ENCODE measurements at regions of chr5 and their contacts with region 1.

Region 1: DNA sequence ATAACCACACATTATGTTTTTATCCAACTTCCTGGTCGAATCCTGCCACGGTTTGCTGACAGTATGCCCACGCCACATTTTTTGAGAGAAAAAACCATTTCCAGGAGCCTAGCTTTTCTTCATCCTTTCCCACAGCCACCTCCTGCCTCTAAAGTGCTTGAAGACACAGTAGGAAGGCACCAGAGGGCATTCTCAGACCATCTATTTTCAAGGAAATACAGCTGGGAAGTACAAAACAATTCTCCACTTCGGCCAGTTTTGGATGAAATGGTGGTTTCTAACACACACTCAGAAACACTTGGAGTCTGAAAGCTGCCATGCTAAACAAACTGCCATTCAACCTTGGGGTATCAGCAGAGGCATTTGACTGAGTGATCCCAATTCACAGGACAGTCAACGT is 86.3 kb upstream of the RPS23 start:
- DNase-seq: peak; percentile 80
- H3K4me3 ChIP-seq: no peak overlapping the region
- H3K27ac ChIP-seq: no peak overlapping the region
- H3K4me1 ChIP-seq: peaks cover 9% of the 10 kb centered on the region
- H3K27me3 ChIP-seq: no peaks in the 10 kb centered on the region
- CTCF ChIP-seq: peak; percentile 55 to 58
- POLR2A ChIP-seq: no peak

Region 2: GRCh38 chr5:81719743-81720345 is 644.7 kb before region 1 on chr5:
- CTCF ChIA-PET with region 1: no interaction called
- POLR2A ChIA-PET with region 1: no interaction called
- dilution Hi-C with region 1: no loop called
- intact Hi-C with region 1: no loop called
- DNase-seq: no peak
- H3K4me3 ChIP-seq: no peak overlapping the region
- H3K27ac ChIP-seq: no peak overlapping the region
- H3K4me1 ChIP-seq: peaks cover 10% of the 10 kb centered on the region
- H3K27me3 ChIP-seq: no peaks in the 10 kb centered on the region
- CTCF ChIP-seq: no peak
- POLR2A ChIP-seq: no peak

Region 3: GRCh38 chr5:82107267-82107666 is 257.2 kb before region 1 on chr5:
- CTCF ChIA-PET with region 1: no interaction called
- POLR2A ChIA-PET with region 1: no interaction called
- dilution Hi-C with region 1: no loop called
- intact Hi-C with region 1: no loop called
- DNase-seq: peak; percentile 32
- H3K4me3 ChIP-seq: no peak overlapping the region
- H3K27ac ChIP-seq: no peak overlapping the region
- H3K4me1 ChIP-seq: no peaks in the 10 kb centered on the region
- H3K27me3 ChIP-seq: no peaks in the 10 kb centered on the region
- CTCF ChIP-seq: peak; percentile 9 to 31
- POLR2A ChIP-seq: no peak

Region 4: GRCh38 chr5:82374637-82375036 is 10.1 kb after region 1 on chr5:
- CTCF ChIA-PET with region 1: interaction called, 11 read pairs
- POLR2A ChIA-PET with region 1: no interaction called
- dilution Hi-C with region 1: no loop called
- intact Hi-C with region 1: no loop called
- DNase-seq: no peak
- H3K4me3 ChIP-seq: no peak overlapping the region
- H3K27ac ChIP-seq: no peak overlapping the region
- H3K4me1 ChIP-seq: no peaks in the 10 kb centered on the region
- H3K27me3 ChIP-seq: no peaks in the 10 kb centered on the region
- CTCF ChIP-seq: no peak
- POLR2A ChIP-seq: no peak

Region 5: GRCh38 chr5:82406205-82406773 is 41.8 kb after region 1 on chr5:
- CTCF ChIA-PET with region 1: interaction called, 8 read pairs
- POLR2A ChIA-PET with region 1: no interaction called
- dilution Hi-C with region 1: no loop called
- intact Hi-C with region 1: loop called (anchors 1 kb)
- DNase-seq: peak; percentile 100
- H3K4me3 ChIP-seq: peak overlapping the region in 1 of 3 experiments; percentile 1
- H3K27ac ChIP-seq: peak overlapping the region; percentile 99
- H3K4me1 ChIP-seq: peaks cover 28% of the 10 kb centered on the region
- H3K27me3 ChIP-seq: no peaks in the 10 kb centered on the region
- CTCF ChIP-seq: no peak
- POLR2A ChIP-seq: peak; percentile 65

Region 6: DNA sequence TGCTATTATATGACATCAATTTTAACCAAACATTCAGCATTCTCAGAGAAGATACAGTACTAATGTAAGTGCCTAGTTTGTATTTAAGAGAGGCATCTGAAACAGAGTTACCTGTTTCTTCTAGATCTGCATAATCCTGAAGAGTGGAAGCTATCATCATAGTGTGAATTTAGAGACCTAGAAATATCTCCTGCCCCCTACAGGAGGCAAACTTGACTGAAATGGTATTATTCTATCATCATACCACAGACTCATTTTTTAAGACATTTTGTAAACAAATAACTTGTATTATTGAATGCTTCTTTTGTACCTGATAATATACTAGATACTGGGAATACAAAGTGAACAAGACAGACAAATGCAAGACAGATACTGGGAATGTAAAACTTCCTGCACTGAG is 130.4 kb after region 1 on chr5:
- CTCF ChIA-PET with region 1: interaction called, 77 read pairs
- POLR2A ChIA-PET with region 1: no interaction called
- dilution Hi-C with region 1: no loop called
- intact Hi-C with region 1: loop called (anchors 1 kb)
- DNase-seq: peak; percentile 30
- H3K4me3 ChIP-seq: no peak overlapping the region
- H3K27ac ChIP-seq: no peak overlapping the region
- H3K4me1 ChIP-seq: no peaks in the 10 kb centered on the region
- H3K27me3 ChIP-seq: peaks cover 0 to 2% of the 10 kb centered on the region in 2 experiments
- CTCF ChIP-seq: peak in 1 of 2 donors; percentile 6
- POLR2A ChIP-seq: no peak

Region 7: DNA sequence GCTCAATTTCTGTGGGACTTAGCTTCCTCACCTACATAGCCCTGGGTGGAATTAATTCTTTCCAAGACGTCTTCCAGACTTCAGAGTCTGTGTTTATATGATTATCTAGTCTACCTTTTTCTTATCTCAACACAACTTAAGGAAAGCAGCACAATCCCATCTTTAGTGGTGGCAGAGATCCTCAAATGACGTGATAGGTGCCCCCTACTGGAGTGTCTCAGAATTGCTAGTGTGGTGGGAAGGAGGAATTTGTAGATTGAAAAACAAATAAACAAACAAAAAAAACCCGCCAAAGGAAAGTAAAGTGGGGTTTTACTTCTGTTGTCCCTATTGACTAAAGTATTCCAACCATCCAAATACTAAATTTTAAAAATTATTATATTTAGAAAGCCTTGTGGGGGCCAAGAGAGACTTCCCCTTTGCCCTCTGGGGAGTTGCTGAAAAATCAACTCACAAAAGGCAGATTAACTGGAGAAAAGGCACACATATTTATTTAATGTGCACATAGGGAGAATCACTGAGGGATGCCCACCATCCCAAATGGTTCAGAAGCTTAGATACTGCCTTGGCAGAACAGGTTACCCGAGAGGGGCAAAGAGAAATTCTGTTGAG is 429.4 kb after region 1 on chr5:
- CTCF ChIA-PET with region 1: interaction called, 29 read pairs
- POLR2A ChIA-PET with region 1: no interaction called
- dilution Hi-C with region 1: no loop called
- intact Hi-C with region 1: loop called (anchors 1 kb)
- DNase-seq: peak; percentile 53
- H3K4me3 ChIP-seq: no peak overlapping the region
- H3K27ac ChIP-seq: no peak overlapping the region
- H3K4me1 ChIP-seq: no peaks in the 10 kb centered on the region
- H3K27me3 ChIP-seq: peaks cover 0 to 7% of the 10 kb centered on the region in 2 experiments
- CTCF ChIP-seq: peak; percentile 67 to 69
- POLR2A ChIP-seq: no peak

Region 8: GRCh38 chr5:83473346-83474163 is 1109.1 kb after region 1 on chr5:
- CTCF ChIA-PET with region 1: interaction called, 5 read pairs
- POLR2A ChIA-PET with region 1: no interaction called
- dilution Hi-C with region 1: no loop called
- intact Hi-C with region 1: loop called (anchors 1 kb)
- DNase-seq: peak; percentile 87
- H3K4me3 ChIP-seq: peak overlapping the region; percentile 48 to 73 (median 59)
- H3K27ac ChIP-seq: no peak overlapping the region
- H3K4me1 ChIP-seq: peaks cover 35% of the 10 kb centered on the region
- H3K27me3 ChIP-seq: peaks cover 49 to 74% of the 10 kb centered on the region in 2 experiments
- CTCF ChIP-seq: peak; percentile 86
- POLR2A ChIP-seq: no peak